Uterus (tissue), 4 donors: ENCODE measurements at regions of chr2 and their contacts with region 1.

Region 1: DNA sequence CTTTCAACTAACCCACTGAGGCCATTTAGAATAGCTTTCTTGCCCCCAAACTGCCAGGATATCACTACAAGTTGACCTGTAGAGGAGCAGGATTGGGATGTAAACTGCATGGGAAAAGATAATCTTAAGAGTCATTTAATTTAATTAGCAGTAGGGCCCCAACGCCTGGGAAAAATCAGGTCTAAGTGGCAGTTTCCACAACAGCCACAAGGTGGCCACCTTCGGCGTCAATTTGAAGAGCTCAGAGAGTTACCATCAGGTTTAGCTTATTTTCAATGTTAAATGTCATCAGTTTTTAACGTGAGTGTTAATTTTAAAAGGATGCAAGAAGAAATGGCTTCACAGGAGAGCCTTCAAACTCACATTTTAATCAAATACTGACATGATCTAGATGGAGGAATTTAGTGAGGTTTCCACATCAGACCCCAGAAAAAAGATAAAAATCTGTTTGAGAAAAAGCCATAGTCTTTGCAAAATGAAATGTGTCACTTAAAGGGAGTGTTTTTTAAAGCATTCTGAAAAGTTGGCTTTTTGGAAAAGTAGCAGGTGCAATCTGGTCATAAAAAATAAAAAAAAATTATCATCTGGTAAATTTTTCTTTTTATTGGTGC is 77.3 kb upstream of the UPP2 start:
- DNase-seq: peak in 1 of 2 donors; percentile 34
- H3K4me3 ChIP-seq: no peak overlapping the region
- H3K27ac ChIP-seq: no peak overlapping the region
- H3K4me1 ChIP-seq: no peaks in the 10 kb centered on the region
- H3K27me3 ChIP-seq: no peaks in the 10 kb centered on the region
- CTCF ChIP-seq: peak; percentile 62 to 79 (median 70)
- POLR2A ChIP-seq: no peak

Region 2: GRCh38 chr2:158745044-158745865 is 720.9 kb after region 1 on chr2:
- intact Hi-C with region 1: loop called (anchors 10 kb)
- DNase-seq: peak; percentile 35 to 58
- H3K4me3 ChIP-seq: no peak overlapping the region
- H3K27ac ChIP-seq: no peak overlapping the region
- H3K4me1 ChIP-seq: no peaks in the 10 kb centered on the region
- H3K27me3 ChIP-seq: no peaks in the 10 kb centered on the region
- CTCF ChIP-seq: peak; percentile 37 to 53 (median 42)
- POLR2A ChIP-seq: no peak